Cardiac septum (tissue), 1 donor: ENCODE measurements at regions of chr7 and their contacts with region 1.

Region 1: DNA sequence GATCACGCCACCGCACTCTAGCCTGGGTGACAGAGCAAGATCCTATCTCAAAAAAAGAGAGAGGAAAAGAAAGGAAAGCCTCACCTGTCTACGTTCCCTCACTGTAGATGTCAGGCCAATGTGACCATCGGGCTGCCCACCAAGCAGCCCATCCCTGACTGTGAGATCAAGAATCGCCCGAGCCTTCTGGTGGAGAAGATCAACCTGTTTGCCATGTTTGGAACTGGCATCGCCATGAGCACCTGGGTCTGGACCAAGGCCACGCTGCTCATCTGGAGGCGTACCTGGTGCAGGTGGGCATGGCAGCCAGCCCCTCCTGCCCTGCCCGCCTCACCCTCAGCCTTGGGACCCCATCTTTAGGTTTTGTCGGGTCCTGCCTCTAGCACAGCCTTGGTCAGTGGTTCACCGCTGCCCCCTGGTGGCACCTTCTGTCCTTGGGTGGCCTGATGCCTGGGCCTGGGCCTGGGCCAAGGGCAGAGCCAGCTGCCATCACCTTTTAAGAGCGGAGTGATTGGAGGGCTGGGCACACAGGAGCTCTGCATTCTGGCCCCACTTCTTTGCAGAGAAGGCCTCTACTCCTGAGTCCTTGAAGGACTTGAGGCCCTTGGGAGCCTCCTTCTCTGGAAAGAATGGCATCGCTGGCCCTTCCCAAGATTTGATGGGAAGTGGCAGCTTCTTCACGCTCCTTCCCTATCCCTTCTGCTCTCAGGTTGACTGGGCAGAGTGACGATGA is 14.4 kb upstream of the AHCYL2 start:
- DNase-seq: peak; percentile 88

Region 2: GRCh38 chr7:129163875-129164544 is 46.4 kb before region 1 on chr7:
- intact Hi-C with region 1: loop called (anchors 2 kb)
- DNase-seq: no peak